AG04449 (cell line): ENCODE measurements at regions of chr7 and their contacts with region 1.

Region 1: GRCh38 chr7:129066290-129067131 is 11.6 kb upstream of the TNPO3 start:
- DNase-seq: peak; percentile 17
- H3K4me3 ChIP-seq: no peak overlapping the region
- CTCF ChIP-seq: no peak

Region 2: DNA sequence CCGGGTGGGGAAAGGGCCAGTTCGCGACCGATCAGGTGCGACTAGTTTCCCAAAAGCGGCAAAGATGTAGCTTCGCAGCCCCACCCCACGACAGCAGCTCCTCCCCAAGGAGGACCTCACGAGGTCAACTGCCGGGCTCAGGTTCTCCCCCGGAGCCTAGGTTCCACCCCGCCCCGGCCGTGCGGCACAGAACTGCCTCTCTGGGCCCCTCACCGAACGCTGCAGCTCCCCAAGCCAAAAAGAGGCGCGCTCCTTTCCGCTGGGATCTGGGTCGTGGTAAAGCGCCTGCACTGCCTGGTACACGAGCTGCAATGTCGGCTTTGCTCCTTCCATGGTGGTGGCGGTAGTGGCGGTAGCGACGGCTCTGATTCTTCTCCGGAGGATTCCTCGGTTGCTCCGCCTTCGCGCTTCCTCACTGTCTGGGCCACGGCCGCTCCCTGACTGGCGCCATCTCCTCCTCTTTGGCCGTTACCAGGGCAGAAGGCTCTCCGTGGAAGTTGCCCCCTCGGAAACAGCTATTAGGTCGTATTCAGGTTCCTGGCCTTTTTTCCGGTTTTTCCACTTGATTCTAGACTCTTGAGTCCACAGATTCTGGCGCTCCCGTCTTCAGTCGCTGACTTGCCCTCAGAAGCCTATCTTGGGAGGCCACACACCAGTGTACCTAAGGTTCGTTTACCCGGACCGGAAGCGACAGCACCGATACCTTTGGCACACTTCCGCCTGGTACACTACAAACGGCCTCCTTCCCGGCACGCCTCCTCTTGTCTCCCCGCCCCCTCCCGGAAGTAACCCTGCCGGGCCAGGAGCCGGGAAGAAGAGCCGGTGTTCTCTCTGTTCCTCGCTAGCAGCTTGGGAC is 11.8 kb before region 1 on chr7 and contains the start of gene TNPO3:
- CTCF ChIA-PET with region 1: interaction called, 4 read pairs
- POLR2A ChIA-PET with region 1: interaction called, 16 read pairs
- DNase-seq: peak; percentile 42
- H3K4me3 ChIP-seq: peak within 1 kb of the TSS; percentile 94
- CTCF ChIP-seq: no peak

Region 3: GRCh38 chr7:129110258-129110981 is 43.9 kb after region 1 on chr7:
- CTCF ChIA-PET with region 1: no interaction called
- POLR2A ChIA-PET with region 1: no interaction called
- DNase-seq: no peak
- H3K4me3 ChIP-seq: no peak overlapping the region
- CTCF ChIP-seq: no peak

Region 4: GRCh38 chr7:129401967-129402860 is 335.7 kb after region 1 on chr7:
- CTCF ChIA-PET with region 1: no interaction called
- POLR2A ChIA-PET with region 1: no interaction called
- DNase-seq: no peak
- H3K4me3 ChIP-seq: no peak overlapping the region
- CTCF ChIP-seq: no peak